AG04449 (cell line): ENCODE measurements at regions of chr20 and their contacts with region 1.

Region 1: GRCh38 chr20:2237059-2237458 is 58.7 kb upstream of the TGM3 start:
- DNase-seq: peak; percentile 98
- H3K4me3 ChIP-seq: no peak overlapping the region
- CTCF ChIP-seq: peak; percentile 5

Region 2: GRCh38 chr20:2109425-2110210 is 127.4 kb before region 1 on chr20:
- CTCF ChIA-PET with region 1: no interaction called
- POLR2A ChIA-PET with region 1: no interaction called
- DNase-seq: no peak
- H3K4me3 ChIP-seq: no peak overlapping the region
- CTCF ChIP-seq: no peak

Region 3: GRCh38 chr20:2314759-2315439 is 77.8 kb after region 1 on chr20:
- CTCF ChIA-PET with region 1: no interaction called
- POLR2A ChIA-PET with region 1: interaction called, 18 read pairs
- DNase-seq: peak; percentile 65
- H3K4me3 ChIP-seq: no peak overlapping the region
- CTCF ChIP-seq: no peak